B cell (primary cell): ENCODE measurements at regions of chr3 and their contacts with region 1.

Region 1: GRCh38 chr3:108477511-108478147 is 32.8 kb downstream of the MYH15 start:
- DNase-seq: peak; percentile 72
- ATAC-seq: peak; percentile 77
- H3K4me3 ChIP-seq: no peak overlapping the region
- H3K4me3 Mint-ChIP-seq: no peak overlapping the region
- H3K27ac ChIP-seq: no peak overlapping the region
- H3K27ac Mint-ChIP-seq: no peak overlapping the region
- H3K4me1 ChIP-seq: peaks cover 4 to 6% of the 10 kb centered on the region in 2 donors
- H3K4me1 Mint-ChIP-seq: peaks cover 12% of the 10 kb centered on the region
- H3K27me3 ChIP-seq: no peaks in the 10 kb centered on the region
- H3K27me3 Mint-ChIP-seq: peaks cover 4% of the 10 kb centered on the region
- CTCF ChIP-seq: peak; percentile 89

Region 2: GRCh38 chr3:107676469-107677309 is 800.9 kb before region 1 on chr3:
- CTCF ChIA-PET with region 1: interaction called, 20 read pairs
- POLR2A ChIA-PET with region 1: no interaction called
- intact Hi-C with region 1: loop called (anchors 5 kb)
- DNase-seq: peak; percentile 38
- ATAC-seq: no peak
- H3K4me3 ChIP-seq: no peak overlapping the region
- H3K4me3 Mint-ChIP-seq: peak overlapping the region; percentile 20
- H3K27ac ChIP-seq: peak overlapping the region; percentile 18 to 77
- H3K27ac Mint-ChIP-seq: peak overlapping the region; percentile 56
- H3K4me1 ChIP-seq: peaks cover 23 to 30% of the 10 kb centered on the region in 2 donors
- H3K4me1 Mint-ChIP-seq: peaks cover 54% of the 10 kb centered on the region
- H3K27me3 ChIP-seq: no peaks in the 10 kb centered on the region
- H3K27me3 Mint-ChIP-seq: no peaks in the 10 kb centered on the region
- CTCF ChIP-seq: peak; percentile 76

Region 3: GRCh38 chr3:107938143-107938542 is 539.5 kb before region 1 on chr3:
- CTCF ChIA-PET with region 1: interaction called, 32 read pairs
- POLR2A ChIA-PET with region 1: no interaction called
- intact Hi-C with region 1: loop called (anchors 1 kb)
- DNase-seq: peak; percentile 46
- ATAC-seq: no peak
- H3K4me3 ChIP-seq: no peak overlapping the region
- H3K4me3 Mint-ChIP-seq: no peak overlapping the region
- H3K27ac ChIP-seq: no peak overlapping the region
- H3K27ac Mint-ChIP-seq: no peak overlapping the region
- H3K4me1 ChIP-seq: no peaks in the 10 kb centered on the region
- H3K4me1 Mint-ChIP-seq: peaks cover 2% of the 10 kb centered on the region
- H3K27me3 ChIP-seq: no peaks in the 10 kb centered on the region
- H3K27me3 Mint-ChIP-seq: peaks cover 3% of the 10 kb centered on the region
- CTCF ChIP-seq: peak; percentile 13

Region 4: DNA sequence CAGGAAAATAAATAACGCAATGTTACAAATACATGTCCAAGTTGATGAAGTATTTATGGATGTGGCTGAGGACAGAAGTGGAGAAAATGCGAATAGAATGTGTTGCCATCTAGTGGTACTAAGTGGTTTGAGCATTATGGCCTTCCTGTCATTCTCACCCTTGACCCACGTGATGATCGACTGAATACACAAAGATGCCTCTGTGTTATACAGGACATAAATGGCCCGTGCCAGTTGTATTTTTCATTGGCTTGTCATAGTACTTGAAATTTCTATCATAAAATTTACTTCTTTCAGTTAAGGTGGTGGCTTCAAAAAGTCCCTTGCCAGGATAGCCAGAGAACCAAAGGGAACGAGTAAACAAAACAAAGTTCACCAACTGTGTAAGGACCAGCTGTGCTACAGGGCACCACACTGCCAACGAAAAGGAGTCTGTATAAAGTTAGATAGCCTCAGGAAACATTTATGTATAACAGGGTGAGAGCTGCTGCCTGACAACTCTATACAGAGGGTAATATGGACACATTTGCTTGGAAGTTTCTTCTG is 70.9 kb before region 1 on chr3:
- CTCF ChIA-PET with region 1: interaction called, 12 read pairs
- POLR2A ChIA-PET with region 1: no interaction called
- intact Hi-C with region 1: no loop called
- DNase-seq: peak; percentile 78
- ATAC-seq: peak; percentile 75
- H3K4me3 ChIP-seq: peak overlapping the region in 1 of 5 experiments; percentile 3
- H3K4me3 Mint-ChIP-seq: peak overlapping the region; percentile 54
- H3K27ac ChIP-seq: peak overlapping the region; percentile 16 to 49
- H3K27ac Mint-ChIP-seq: peak overlapping the region; percentile 82
- H3K4me1 ChIP-seq: peaks cover 26 to 27% of the 10 kb centered on the region in 2 donors
- H3K4me1 Mint-ChIP-seq: peaks cover 31% of the 10 kb centered on the region
- H3K27me3 ChIP-seq: no peaks in the 10 kb centered on the region
- H3K27me3 Mint-ChIP-seq: no peaks in the 10 kb centered on the region
- CTCF ChIP-seq: peak; percentile 79

Region 5: GRCh38 chr3:108489771-108490170 is 12.1 kb after region 1 on chr3:
- CTCF ChIA-PET with region 1: interaction called, 13 read pairs
- POLR2A ChIA-PET with region 1: no interaction called
- intact Hi-C with region 1: no loop called
- DNase-seq: peak; percentile 78
- ATAC-seq: peak; percentile 68
- H3K4me3 ChIP-seq: no peak overlapping the region
- H3K4me3 Mint-ChIP-seq: no peak overlapping the region
- H3K27ac ChIP-seq: no peak overlapping the region
- H3K27ac Mint-ChIP-seq: no peak overlapping the region
- H3K4me1 ChIP-seq: peaks cover 0 to 2% of the 10 kb centered on the region in 2 donors
- H3K4me1 Mint-ChIP-seq: peaks cover 4% of the 10 kb centered on the region
- H3K27me3 ChIP-seq: no peaks in the 10 kb centered on the region
- H3K27me3 Mint-ChIP-seq: no peaks in the 10 kb centered on the region
- CTCF ChIP-seq: peak; percentile 87

Region 6: DNA sequence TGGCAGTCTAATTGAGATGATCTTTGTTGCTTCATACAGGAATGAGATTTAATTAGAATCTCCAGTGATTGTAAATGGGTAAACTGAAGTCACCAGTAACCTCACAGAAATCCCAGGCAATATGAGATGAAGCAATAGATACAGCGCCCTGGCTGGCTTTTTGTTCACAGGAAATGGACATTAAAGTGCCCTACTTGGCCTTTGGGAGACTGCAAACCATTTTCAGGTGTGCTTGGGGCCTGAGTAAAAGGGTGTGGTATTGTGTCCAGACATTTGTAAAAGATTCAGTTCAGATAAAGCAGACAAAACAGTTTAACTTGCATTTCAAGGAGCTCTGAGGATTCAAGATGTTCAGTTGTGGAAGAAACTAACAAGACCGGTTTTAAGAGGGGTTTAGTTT is 44.0 kb after region 1 on chr3:
- CTCF ChIA-PET with region 1: no interaction called
- POLR2A ChIA-PET with region 1: no interaction called
- intact Hi-C with region 1: no loop called
- DNase-seq: no peak
- ATAC-seq: no peak
- H3K4me3 ChIP-seq: no peak overlapping the region
- H3K4me3 Mint-ChIP-seq: no peak overlapping the region
- H3K27ac ChIP-seq: no peak overlapping the region
- H3K27ac Mint-ChIP-seq: no peak overlapping the region
- H3K4me1 ChIP-seq: no peaks in the 10 kb centered on the region
- H3K4me1 Mint-ChIP-seq: no peaks in the 10 kb centered on the region
- H3K27me3 ChIP-seq: no peaks in the 10 kb centered on the region
- H3K27me3 Mint-ChIP-seq: peaks cover 11% of the 10 kb centered on the region
- CTCF ChIP-seq: no peak

Region 7: DNA sequence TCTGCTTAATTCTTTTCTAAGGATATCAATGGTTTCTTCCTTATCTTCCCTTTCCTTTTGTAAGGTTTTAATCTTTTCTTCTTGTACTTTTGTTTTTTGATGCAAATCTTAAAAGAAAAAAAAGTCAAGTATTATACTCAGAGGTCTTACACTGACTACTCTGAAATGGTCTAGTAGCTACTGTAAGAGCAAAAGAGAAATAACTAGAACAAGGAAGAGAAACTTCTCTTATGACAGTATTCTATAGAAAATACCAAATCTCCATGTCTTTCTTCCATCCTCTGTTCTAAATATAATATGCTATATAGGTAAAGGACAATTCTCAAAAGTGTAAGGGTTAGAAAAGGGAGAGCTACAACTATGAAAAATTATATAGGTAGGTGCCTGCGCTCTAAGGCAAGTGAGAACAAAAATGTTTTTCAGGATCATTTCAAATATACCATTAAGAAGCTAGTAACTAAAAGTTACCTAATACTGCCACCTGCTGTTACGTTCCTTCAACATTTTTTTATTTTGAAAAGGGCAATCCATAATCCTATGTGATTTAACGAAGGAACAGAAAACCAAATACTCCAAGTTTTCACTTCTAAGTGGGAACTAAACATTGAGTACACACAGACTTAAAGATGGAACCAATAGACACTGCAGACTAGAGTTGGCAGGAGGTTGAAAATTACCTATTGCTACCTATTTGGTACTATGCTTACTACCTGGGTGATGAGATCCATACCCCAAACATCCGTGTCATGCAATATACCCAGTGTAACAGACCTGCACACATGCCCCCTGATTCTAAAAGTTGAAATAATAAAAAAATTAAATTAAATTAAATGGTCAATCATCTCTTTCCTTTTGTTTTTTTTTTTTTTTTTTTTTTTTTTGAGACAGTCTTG is 74.9 kb after region 1 on chr3:
- CTCF ChIA-PET with region 1: interaction called, 26 read pairs
- POLR2A ChIA-PET with region 1: no interaction called
- intact Hi-C with region 1: no loop called
- DNase-seq: peak; percentile 70
- ATAC-seq: peak; percentile 51
- H3K4me3 ChIP-seq: no peak overlapping the region
- H3K4me3 Mint-ChIP-seq: no peak overlapping the region
- H3K27ac ChIP-seq: peak overlapping the region in 1 of 2 donors; percentile 65
- H3K27ac Mint-ChIP-seq: peak overlapping the region; percentile 18
- H3K4me1 ChIP-seq: peaks cover 0 to 8% of the 10 kb centered on the region in 2 donors
- H3K4me1 Mint-ChIP-seq: peaks cover 7% of the 10 kb centered on the region
- H3K27me3 ChIP-seq: no peaks in the 10 kb centered on the region
- H3K27me3 Mint-ChIP-seq: no peaks in the 10 kb centered on the region
- CTCF ChIP-seq: peak; percentile 75